K562 (cell line): ENCODE measurements at regions of chr16 and their contacts with region 1.

Region 1: GRCh38 chr16:50884066-50884860 is 142.4 kb downstream of the CYLD start:
- DNase-seq: peak; percentile 60 to 81 (median 76)
- ATAC-seq: peak; percentile 87
- H3K4me3 ChIP-seq: no peak overlapping the region
- H3K27ac ChIP-seq: no peak overlapping the region
- H3K4me1 ChIP-seq: peaks cover 0 to 3% of the 10 kb centered on the region in 2 experiments; a peak in 2 of 5 replicates
- H3K27me3 ChIP-seq: no peaks in the 10 kb centered on the region; a peak in 2 of 5 replicates
- CTCF ChIP-seq: peak; percentile 58 to 66 (median 60)
- EP300 ChIP-seq: no peak
- POLR2A ChIP-seq: no peak
- RAD21 ChIP-seq: peak in 1 of 2 experiments; percentile 29; a peak in 2 of 4 replicates

Region 2: GRCh38 chr16:50821586-50821985 is 62.7 kb before region 1 on chr16:
- CTCF ChIA-PET with region 1: no interaction called
- POLR2A ChIA-PET with region 1: no interaction called
- in situ Hi-C with region 1: no loop called
- intact Hi-C with region 1: loop called (anchors 5 kb)
- DNase-seq: peak in 2 of 4 experiments; percentile 14 to 18
- ATAC-seq: peak; percentile 68
- H3K4me3 ChIP-seq: no peak overlapping the region
- H3K27ac ChIP-seq: no peak overlapping the region
- H3K4me1 ChIP-seq: no peaks in the 10 kb centered on the region
- H3K27me3 ChIP-seq: peaks cover 9 to 34% of the 10 kb centered on the region in 2 experiments; a peak in 4 of 5 replicates
- CTCF ChIP-seq: peak; percentile 42 to 48 (median 46); a peak in 5 of 6 replicates
- EP300 ChIP-seq: no peak
- POLR2A ChIP-seq: no peak
- RAD21 ChIP-seq: peak in 1 of 2 experiments; percentile 45; a peak in 2 of 4 replicates

Region 3: GRCh38 chr16:50841081-50841886 is 43.0 kb before region 1 on chr16:
- CTCF ChIA-PET with region 1: no interaction called
- POLR2A ChIA-PET with region 1: no interaction called
- in situ Hi-C with region 1: no loop called
- intact Hi-C with region 1: loop called (anchors 2 kb)
- DNase-seq: peak; percentile 78 to 93 (median 84)
- ATAC-seq: peak; percentile 96
- H3K4me3 ChIP-seq: peak overlapping the region; percentile 26; the same call in 1 of the 2 replicates
- H3K27ac ChIP-seq: peak overlapping the region; percentile 51; the same call in 2 of the 3 replicates
- H3K4me1 ChIP-seq: peaks cover 17 to 19% of the 10 kb centered on the region in 2 experiments
- H3K27me3 ChIP-seq: peaks cover 0 to 17% of the 10 kb centered on the region in 2 experiments; a peak in 2 of 5 replicates
- CTCF ChIP-seq: peak in 1 of 3 experiments; percentile 8; a peak in 1 of 6 replicates
- EP300 ChIP-seq: peak; percentile 88
- POLR2A ChIP-seq: no peak
- RAD21 ChIP-seq: no peak

Region 4: GRCh38 chr16:50967827-50968612 is 83.8 kb after region 1 on chr16:
- CTCF ChIA-PET with region 1: no interaction called
- POLR2A ChIA-PET with region 1: no interaction called
- in situ Hi-C with region 1: no loop called
- intact Hi-C with region 1: no loop called
- DNase-seq: no peak
- ATAC-seq: no peak
- H3K4me3 ChIP-seq: no peak overlapping the region
- H3K27ac ChIP-seq: no peak overlapping the region
- H3K4me1 ChIP-seq: no peaks in the 10 kb centered on the region
- H3K27me3 ChIP-seq: peaks cover 0 to 5% of the 10 kb centered on the region in 2 experiments; a peak in 1 of 5 replicates
- CTCF ChIP-seq: no peak
- EP300 ChIP-seq: no peak
- POLR2A ChIP-seq: no peak
- RAD21 ChIP-seq: no peak

Region 5: GRCh38 chr16:51048544-51048943 is 164.3 kb after region 1 on chr16:
- CTCF ChIA-PET with region 1: no interaction called
- POLR2A ChIA-PET with region 1: no interaction called
- in situ Hi-C with region 1: no loop called
- intact Hi-C with region 1: no loop called
- DNase-seq: peak; percentile 28 to 49 (median 41)
- ATAC-seq: peak; percentile 83
- H3K4me3 ChIP-seq: no peak overlapping the region
- H3K27ac ChIP-seq: no peak overlapping the region
- H3K4me1 ChIP-seq: peaks cover 6 to 7% of the 10 kb centered on the region in 2 experiments; a peak in 2 of 5 replicates
- H3K27me3 ChIP-seq: no peaks in the 10 kb centered on the region; a peak in 1 of 5 replicates
- CTCF ChIP-seq: no peak
- EP300 ChIP-seq: no peak
- POLR2A ChIP-seq: no peak
- RAD21 ChIP-seq: no peak